Right lobe of liver (tissue), 6 donors: ENCODE measurements at regions of chr20 and their contacts with region 1.

Region 1: GRCh38 chr20:18926965-18927364 is 113.4 kb downstream of the SCP2D1 start:
- DNase-seq: no peak
- ATAC-seq: no peak
- H3K4me3 ChIP-seq: no peak overlapping the region
- H3K27ac ChIP-seq: no peak overlapping the region
- H3K4me1 ChIP-seq: no peaks in the 10 kb centered on the region
- H3K27me3 ChIP-seq: no peaks in the 10 kb centered on the region
- CTCF ChIP-seq: no peak
- POLR2A ChIP-seq: no peak

Region 2: DNA sequence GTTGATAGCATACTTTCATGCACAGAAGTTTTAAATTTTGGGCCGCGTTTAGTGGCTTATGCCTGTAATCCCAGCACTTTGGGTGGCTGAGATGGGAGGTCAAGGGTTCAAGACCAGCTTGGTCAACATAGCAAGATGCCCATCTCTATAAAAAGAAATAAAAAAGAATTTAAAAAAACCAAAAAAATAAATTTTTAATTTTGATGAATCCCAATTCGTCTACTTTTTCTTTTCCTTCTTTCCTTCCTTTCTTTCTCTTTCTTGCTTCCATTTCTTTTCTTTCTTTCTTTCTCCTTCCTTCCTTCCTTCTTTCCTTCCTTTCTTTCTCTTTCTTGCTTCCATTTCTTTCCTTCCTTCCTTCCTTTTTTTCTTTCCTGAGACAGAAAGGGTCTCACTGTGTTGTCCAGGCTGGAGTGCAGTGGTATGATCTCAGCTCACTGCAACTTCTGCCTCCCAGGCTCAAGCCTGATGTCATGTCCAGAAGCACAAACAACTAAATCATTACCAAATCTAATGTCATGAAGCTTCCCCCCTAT is 693.5 kb before region 1 on chr20:
- intact Hi-C with region 1: no loop called
- DNase-seq: no peak
- ATAC-seq: no peak
- H3K4me3 ChIP-seq: no peak overlapping the region
- H3K27ac ChIP-seq: no peak overlapping the region
- H3K4me1 ChIP-seq: no peaks in the 10 kb centered on the region
- H3K27me3 ChIP-seq: no peaks in the 10 kb centered on the region
- CTCF ChIP-seq: no peak
- POLR2A ChIP-seq: no peak

Region 3: GRCh38 chr20:18857640-18858039 is 69.3 kb before region 1 on chr20:
- intact Hi-C with region 1: loop called in 1 of 2 experiments (anchors 10 kb)
- DNase-seq: no peak
- ATAC-seq: peak in 1 of 4 donors; percentile 28
- H3K4me3 ChIP-seq: no peak overlapping the region
- H3K27ac ChIP-seq: no peak overlapping the region
- H3K4me1 ChIP-seq: no peaks in the 10 kb centered on the region
- H3K27me3 ChIP-seq: no peaks in the 10 kb centered on the region
- CTCF ChIP-seq: no peak
- POLR2A ChIP-seq: no peak